Heart right ventricle (tissue), 16 donors: ENCODE measurements at regions of chr15 and their contacts with region 1.

Region 1: GRCh38 chr15:91116113-91117067 is 16.3 kb downstream of the SV2B start:
- DNase-seq: peak in 1 of 2 donors; percentile 48
- ATAC-seq: peak; percentile 65 to 93 (median 86)
- H3K4me3 ChIP-seq: no peak overlapping the region
- H3K27ac ChIP-seq: peak overlapping the region in 4 of 10 donors; percentile 7 to 58 (median 28)
- H3K4me1 ChIP-seq: peaks cover 0 to 45% (median 18%) of the 10 kb centered on the region in 9 donors
- H3K27me3 ChIP-seq: no peaks in the 10 kb centered on the region
- CTCF ChIP-seq: no peak

Region 2: DNA sequence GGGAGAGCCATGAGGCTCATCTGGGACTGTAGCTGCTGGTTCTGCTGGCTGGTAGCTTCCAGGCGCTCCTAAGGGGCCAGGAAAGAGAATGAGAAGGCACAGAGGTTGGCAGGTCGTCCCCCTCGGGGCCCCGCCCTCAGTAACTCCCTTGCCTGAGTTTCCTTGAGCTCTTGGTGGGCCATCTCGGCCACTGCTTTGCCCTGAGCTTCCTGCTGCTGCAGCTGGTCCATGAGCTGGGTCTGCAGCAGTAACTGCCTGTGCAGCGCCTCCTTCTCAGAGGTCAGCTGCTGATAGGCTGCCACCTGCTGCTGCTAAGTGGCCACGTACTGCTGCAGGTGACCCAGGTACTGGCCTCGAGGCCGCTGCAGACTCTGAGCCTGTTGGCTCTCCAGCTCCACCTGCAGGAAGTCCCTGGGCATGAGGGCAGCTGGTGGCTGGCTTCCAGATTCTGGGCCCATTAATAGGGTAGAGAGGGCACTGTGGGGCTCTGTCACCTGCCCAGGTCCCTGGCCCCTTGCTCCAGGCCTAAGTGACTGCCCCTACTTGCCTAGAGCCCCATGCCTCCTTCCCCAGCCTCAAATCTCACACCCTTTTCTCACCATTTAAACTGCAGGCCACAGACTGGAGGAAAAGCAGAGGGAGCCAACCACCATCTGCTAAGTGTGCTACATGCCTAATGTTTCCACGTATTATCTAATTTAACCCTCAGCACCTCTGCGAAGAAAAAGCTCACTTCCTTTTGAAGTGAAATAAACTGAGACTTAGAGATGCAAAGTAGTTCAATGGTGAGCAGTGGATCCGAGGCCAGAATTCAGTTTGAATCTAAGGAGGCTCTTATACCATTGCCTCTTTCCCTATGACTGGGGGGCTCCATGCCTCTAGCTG is 83.2 kb before region 1 on chr15:
- intact Hi-C with region 1: no loop called
- DNase-seq: peak; percentile 34 to 45
- ATAC-seq: peak in 1 of 8 donors; percentile 56
- H3K4me3 ChIP-seq: no peak overlapping the region
- H3K27ac ChIP-seq: no peak overlapping the region
- H3K4me1 ChIP-seq: peaks cover 0 to 4% (median 0%) of the 10 kb centered on the region in 9 donors
- H3K27me3 ChIP-seq: peaks cover 0 to 8% (median 0%) of the 10 kb centered on the region in 7 donors
- CTCF ChIP-seq: peak; percentile 18 to 65 (median 60)

Region 3: DNA sequence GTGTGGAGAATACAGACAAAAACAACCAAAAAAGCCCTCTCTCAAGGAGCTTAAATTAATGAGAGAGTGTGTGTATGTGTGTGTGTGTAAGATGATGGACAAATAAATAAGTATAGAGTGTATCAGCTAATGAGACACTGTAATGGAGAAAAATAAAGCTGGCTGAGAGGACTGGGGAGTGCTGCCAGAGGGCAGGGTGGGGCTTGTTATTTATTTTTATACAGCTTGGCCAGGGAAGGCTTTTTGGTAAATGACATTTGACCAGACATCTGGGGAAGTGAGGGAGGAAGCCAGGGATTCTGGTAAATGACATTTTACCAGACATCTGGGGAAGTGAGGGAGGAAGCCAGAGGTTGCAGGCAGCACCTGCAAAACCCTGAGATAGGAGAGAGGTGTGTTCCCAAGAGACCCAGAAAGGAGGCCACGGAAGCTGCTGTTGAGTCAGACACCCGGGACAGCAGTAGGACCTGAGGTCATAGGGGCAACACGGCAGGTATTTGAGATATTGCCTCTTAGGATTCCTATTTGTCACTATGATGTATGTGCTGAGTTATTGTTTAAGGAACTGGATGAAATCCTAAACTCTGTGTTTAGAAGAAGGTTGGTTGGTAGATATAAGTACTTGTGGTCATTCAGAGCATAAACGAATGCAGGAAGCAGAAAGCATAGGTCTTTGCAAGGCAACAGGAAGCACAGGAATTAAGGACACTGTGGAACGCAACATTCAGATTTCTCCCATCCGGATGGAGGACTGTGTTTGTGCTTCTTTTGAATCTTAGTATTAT is 13.7 kb before region 1 on chr15:
- intact Hi-C with region 1: loop called in 1 of 10 experiments (anchors 2 kb)
- DNase-seq: peak in 1 of 2 donors; percentile 43
- ATAC-seq: peak in 6 of 8 donors; percentile 38 to 61 (median 55)
- H3K4me3 ChIP-seq: peak overlapping the region in 1 of 10 donors; percentile 57
- H3K27ac ChIP-seq: peak overlapping the region in 6 of 10 donors; percentile 5 to 72 (median 47)
- H3K4me1 ChIP-seq: peaks cover 3 to 51% (median 37%) of the 10 kb centered on the region in 9 donors
- H3K27me3 ChIP-seq: peaks cover 0 to 65% (median 15%) of the 10 kb centered on the region in 7 donors
- CTCF ChIP-seq: no peak

Region 4: GRCh38 chr15:92803847-92804609 is 1687.6 kb after region 1 on chr15:
- intact Hi-C with region 1: no loop called
- DNase-seq: peak; percentile 40
- ATAC-seq: peak; percentile 42 to 91 (median 66)
- H3K4me3 ChIP-seq: no peak overlapping the region
- H3K27ac ChIP-seq: peak overlapping the region; percentile 3 to 96 (median 66)
- H3K4me1 ChIP-seq: peaks cover 3 to 67% (median 14%) of the 10 kb centered on the region in 9 donors
- H3K27me3 ChIP-seq: no peaks in the 10 kb centered on the region
- CTCF ChIP-seq: no peak